Activated T-helper 1 cell treated with anti-CD3 and anti-CD28 coated beads, Interleukin-12 subunit alpha, Interleukin-12 subunit beta, Interleukin-2, Interleukin-4 antibody, amounts not matched to agents 30 ng/mL and 10 ng/mL and 1 ng/mL, durations not matched to agents 14 hours and 24 hours and 36 hours (primary cell): ENCODE measurements at regions of chr16 and their contacts with region 1.

Region 1: DNA sequence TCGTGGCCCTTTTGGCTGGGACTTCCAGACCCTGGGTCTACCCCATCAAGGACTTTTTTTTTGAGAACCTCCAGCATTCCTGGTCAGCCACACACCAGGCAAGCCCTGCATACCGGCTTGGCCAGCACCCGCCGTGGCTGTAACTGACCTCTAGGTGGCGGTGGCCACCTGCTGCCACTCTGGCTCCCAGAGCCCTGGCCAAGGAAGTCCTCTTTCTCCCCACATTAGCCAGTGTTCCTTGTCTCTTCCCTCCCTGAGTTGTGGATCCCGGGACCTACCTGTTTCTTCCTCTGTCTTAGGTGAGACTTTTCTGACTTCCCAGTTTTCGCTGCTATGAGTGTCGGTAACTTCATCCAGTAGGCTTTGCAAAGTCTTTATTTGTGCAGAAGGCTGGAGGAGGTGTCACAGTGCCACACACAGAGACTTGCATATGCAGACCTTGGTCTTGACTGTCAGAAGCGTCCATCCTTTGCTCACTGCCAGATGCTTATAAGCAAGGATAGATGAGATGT is 348.3 kb downstream of the CPPED1 start:
- DNase-seq: peak; percentile 18
- H3K4me3 Mint-ChIP-seq: no peak overlapping the region
- H3K27ac Mint-ChIP-seq: no peak overlapping the region
- H3K4me1 Mint-ChIP-seq: peaks cover 44% of the 10 kb centered on the region
- H3K27me3 Mint-ChIP-seq: no peaks in the 10 kb centered on the region

Region 2: DNA sequence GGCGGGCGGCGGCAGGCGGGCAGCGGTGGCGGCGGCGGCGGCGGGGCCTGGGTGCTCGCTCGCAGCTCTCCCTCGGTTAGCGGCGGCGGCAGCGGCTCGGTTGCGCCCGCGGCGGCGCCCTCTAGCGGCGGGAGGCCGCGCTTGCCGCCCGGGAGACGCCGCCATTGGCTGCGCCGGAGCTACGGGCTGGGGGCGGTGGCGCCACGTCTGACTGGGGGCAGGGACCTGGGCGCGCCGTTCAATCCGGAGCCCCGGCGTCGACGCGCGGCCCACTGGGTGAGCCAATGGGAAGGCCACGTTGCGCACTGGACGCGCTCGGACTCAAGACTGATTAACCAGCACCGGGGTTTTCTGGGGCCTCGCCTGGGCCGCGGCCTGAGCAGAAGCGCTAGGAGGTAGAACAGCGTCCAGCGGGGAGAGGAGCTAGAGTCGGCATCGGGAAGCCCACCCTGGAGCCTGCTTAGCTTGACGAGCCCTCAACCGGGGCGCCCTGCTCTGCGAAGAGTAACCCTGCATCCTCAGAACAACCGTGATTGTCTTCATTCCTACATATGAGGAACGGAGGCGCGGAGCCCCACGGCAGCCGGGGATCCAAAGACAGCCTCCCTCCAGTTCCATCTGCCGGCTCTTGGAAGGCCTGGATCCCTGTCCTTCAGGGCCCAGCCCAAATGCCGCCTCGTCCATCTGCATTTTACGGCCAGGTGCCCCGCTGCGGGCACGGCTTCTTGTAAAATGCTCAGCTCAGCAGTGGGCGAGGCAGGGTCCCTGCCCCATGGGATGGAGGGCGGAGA is 658.0 kb before region 1 on chr16 and contains the start of gene ZC3H7A:
- intact Hi-C with region 1: no loop called
- DNase-seq: peak; percentile 95
- H3K4me3 Mint-ChIP-seq: peak within 1 kb of the TSS; percentile 92
- H3K27ac Mint-ChIP-seq: peak within 1 kb of the TSS; percentile 94
- H3K4me1 Mint-ChIP-seq: peaks cover 75% of the 10 kb centered on the region
- H3K27me3 Mint-ChIP-seq: no peaks in the 10 kb centered on the region
- total RNA-seq, gene ZC3H7A: 71.0 and 78.9 TPM in 2 replicates

Region 3: GRCh38 chr16:12095275-12096156 is 359.8 kb before region 1 on chr16:
- intact Hi-C with region 1: loop called (anchors 10 kb)
- DNase-seq: peak; percentile 38
- H3K4me3 Mint-ChIP-seq: no peak overlapping the region
- H3K27ac Mint-ChIP-seq: no peak overlapping the region
- H3K4me1 Mint-ChIP-seq: peaks cover 5% of the 10 kb centered on the region
- H3K27me3 Mint-ChIP-seq: peaks cover 2% of the 10 kb centered on the region

Region 4: GRCh38 chr16:12426122-12426521 is 29.2 kb before region 1 on chr16:
- intact Hi-C with region 1: no loop called
- DNase-seq: no peak
- H3K4me3 Mint-ChIP-seq: no peak overlapping the region
- H3K27ac Mint-ChIP-seq: no peak overlapping the region
- H3K4me1 Mint-ChIP-seq: peaks cover 5% of the 10 kb centered on the region
- H3K27me3 Mint-ChIP-seq: peaks cover 1% of the 10 kb centered on the region

Region 5: GRCh38 chr16:12573730-12574383 is 118.5 kb after region 1 on chr16:
- intact Hi-C with region 1: loop called (anchors 1 kb)
- DNase-seq: peak; percentile 36
- H3K4me3 Mint-ChIP-seq: no peak overlapping the region
- H3K27ac Mint-ChIP-seq: no peak overlapping the region
- H3K4me1 Mint-ChIP-seq: peaks cover 27% of the 10 kb centered on the region
- H3K27me3 Mint-ChIP-seq: no peaks in the 10 kb centered on the region

Region 6: DNA sequence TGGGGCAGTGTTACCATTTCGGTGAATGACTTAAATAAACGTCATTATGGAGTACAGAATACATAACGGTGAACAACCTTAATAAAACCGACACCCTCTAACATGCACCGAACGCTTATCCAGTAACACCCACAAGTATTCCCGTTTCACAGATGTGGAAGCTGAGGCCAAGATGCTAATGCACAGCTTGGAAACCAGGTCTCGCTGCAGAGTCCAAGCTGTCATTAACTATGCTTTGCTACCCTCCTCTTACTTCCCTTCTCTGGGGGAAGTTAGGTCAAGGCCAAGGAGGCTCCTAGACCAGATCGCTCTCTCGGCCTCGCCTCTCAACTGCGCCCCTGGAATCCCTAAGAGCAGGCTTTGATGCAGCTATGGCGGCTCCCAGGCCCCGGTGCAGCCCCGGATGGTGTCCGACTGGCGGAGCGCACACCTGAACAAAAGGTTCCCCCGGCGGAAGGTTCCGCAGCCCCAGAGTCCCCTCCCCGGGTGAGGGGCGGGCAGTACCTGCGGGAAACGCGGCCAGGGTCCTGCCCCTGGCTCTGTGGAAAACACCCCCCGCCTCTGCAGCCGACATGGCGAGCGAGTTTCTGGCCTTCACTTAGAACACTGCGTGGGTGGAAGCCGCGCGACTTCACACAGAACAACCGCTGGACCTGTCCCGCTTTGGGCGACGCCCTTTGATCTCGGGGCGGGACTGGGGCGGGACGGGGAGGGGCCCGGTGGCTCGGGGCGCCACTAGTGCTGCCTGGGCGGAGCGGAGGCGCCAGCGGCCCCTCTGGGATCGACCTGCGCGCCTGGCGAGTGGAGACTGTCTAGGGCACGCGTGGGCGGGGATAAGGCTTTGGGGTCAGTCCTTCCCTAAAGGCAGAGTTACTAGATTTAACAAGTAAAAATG is 348.1 kb after region 1 on chr16 and contains the start of gene CPPED1:
- intact Hi-C with region 1: loop called (anchors 5 kb)
- DNase-seq: peak; percentile 89
- H3K4me3 Mint-ChIP-seq: peak within 1 kb of the TSS; percentile 93
- H3K27ac Mint-ChIP-seq: peak within 1 kb of the TSS; percentile 91
- H3K4me1 Mint-ChIP-seq: peaks cover 26% of the 10 kb centered on the region
- H3K27me3 Mint-ChIP-seq: no peaks in the 10 kb centered on the region
- total RNA-seq, gene CPPED1: 5.0 and 5.4 TPM in 2 replicates

Region 7: DNA sequence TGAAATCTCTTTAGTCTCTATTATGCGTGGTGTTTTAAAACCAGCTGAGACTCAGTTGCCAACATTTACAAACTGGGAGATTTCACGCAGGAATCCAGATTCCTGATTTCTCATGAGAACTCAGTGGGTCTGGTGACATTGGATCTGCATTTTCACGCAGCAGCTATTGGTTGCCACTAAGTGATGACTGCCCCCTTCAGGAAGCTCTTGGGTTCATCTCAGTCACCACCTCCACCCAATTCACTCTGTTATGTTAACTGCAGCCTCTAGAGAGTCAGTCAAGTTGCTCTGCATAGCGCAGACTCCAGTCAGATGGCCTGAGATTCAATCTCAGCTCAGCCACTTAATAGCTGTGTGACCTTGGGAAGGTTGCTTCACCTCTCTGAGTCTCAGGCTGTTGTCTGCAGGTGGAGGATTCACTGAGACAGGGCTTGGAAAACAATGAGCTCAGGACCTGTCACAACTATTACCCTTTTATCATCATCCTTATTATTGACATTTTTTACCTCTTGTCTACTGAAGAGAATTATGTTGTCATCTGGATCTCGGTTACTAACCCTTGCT is 452.4 kb after region 1 on chr16:
- intact Hi-C with region 1: loop called (anchors 1 kb)
- DNase-seq: no peak
- H3K4me3 Mint-ChIP-seq: no peak overlapping the region
- H3K27ac Mint-ChIP-seq: no peak overlapping the region
- H3K4me1 Mint-ChIP-seq: no peaks in the 10 kb centered on the region
- H3K27me3 Mint-ChIP-seq: peaks cover 44% of the 10 kb centered on the region